ENCODE measurements at regions of chr6 and their contacts with region 1.

Region 1: GRCh38 chr6:28349892-28350737 is at the start of gene ZKSCAN3:
- DNase-seq: peak; percentile 84
- H3K4me3 Mint-ChIP-seq: peak within 1 kb of the TSS; percentile 98
- H3K27ac Mint-ChIP-seq: peak within 1 kb of the TSS; percentile 91
- H3K4me1 Mint-ChIP-seq: peaks cover 28% of the 10 kb centered on the region
- H3K27me3 Mint-ChIP-seq: peaks cover 16% of the 10 kb centered on the region
- total RNA-seq, gene ZKSCAN3: 2.9 and 3.3 TPM in 2 replicates

Region 2: GRCh38 chr6:27825025-27825793 is 524.9 kb before region 1 on chr6:
- intact Hi-C with region 1: no loop called
- DNase-seq: no peak
- H3K4me3 Mint-ChIP-seq: peak overlapping the region; percentile 89
- H3K27ac Mint-ChIP-seq: peak overlapping the region; percentile 96
- H3K4me1 Mint-ChIP-seq: peaks cover 46% of the 10 kb centered on the region
- H3K27me3 Mint-ChIP-seq: peaks cover 3% of the 10 kb centered on the region

Region 3: GRCh38 chr6:27951040-27951439 is 399.1 kb before region 1 on chr6:
- intact Hi-C with region 1: no loop called
- DNase-seq: no peak
- H3K4me3 Mint-ChIP-seq: no peak overlapping the region
- H3K27ac Mint-ChIP-seq: no peak overlapping the region
- H3K4me1 Mint-ChIP-seq: no peaks in the 10 kb centered on the region
- H3K27me3 Mint-ChIP-seq: peaks cover 22% of the 10 kb centered on the region

Region 4: GRCh38 chr6:28080631-28081485 is 269.3 kb before region 1 on chr6:
- intact Hi-C with region 1: loop called (anchors 1 kb)
- DNase-seq: peak; percentile 82
- H3K4me3 Mint-ChIP-seq: peak overlapping the region; percentile 96
- H3K27ac Mint-ChIP-seq: peak overlapping the region; percentile 96
- H3K4me1 Mint-ChIP-seq: peaks cover 21% of the 10 kb centered on the region
- H3K27me3 Mint-ChIP-seq: peaks cover 2% of the 10 kb centered on the region

Region 5: GRCh38 chr6:28335564-28336283 is 14.4 kb before region 1 on chr6 and contains the start of gene ZSCAN31:
- intact Hi-C with region 1: loop called (anchors 1 kb)
- DNase-seq: peak; percentile 56
- H3K4me3 Mint-ChIP-seq: no peak within 1 kb of the TSS
- H3K27ac Mint-ChIP-seq: no peak within 1 kb of the TSS
- H3K4me1 Mint-ChIP-seq: no peaks in the 10 kb centered on the region
- H3K27me3 Mint-ChIP-seq: peaks cover 7% of the 10 kb centered on the region
- total RNA-seq, gene ZSCAN31: 1.0 and 1.2 TPM in 2 replicates

Region 6: DNA sequence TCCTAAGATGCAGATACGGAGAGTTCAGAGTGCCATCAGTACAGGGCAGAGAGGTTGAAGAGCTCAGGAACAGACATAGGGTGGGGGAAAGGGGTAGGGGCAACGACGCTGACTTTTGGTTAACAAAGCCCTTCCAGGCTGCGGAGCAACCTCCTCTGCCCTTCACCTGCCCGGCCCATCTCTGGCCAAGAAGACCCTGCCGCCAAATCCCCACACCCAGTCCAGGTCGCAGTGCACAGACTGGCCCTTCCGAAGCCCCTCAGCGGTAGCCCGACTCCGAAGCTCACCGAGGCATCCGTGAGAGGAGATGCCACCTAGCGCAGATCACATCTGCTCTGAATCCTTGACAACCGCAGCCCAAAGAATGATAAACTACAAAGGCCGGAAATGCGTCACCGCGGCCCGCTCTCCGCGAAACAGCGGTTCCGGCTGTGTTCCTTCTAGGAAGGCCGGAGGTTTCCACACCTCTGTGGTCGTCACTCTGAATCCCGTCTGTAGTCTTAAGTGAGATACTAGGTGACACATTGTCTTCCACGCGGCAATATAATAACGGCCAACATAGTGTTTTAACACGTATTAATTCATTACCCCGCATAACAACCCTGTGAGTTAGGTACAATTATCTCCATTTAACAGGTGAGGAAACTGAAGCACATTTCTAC is 93.1 kb after region 1 on chr6 and contains the start of gene ZSCAN23:
- intact Hi-C with region 1: loop called (anchors 5 kb)
- DNase-seq: peak; percentile 79
- H3K4me3 Mint-ChIP-seq: peak within 1 kb of the TSS; percentile 98
- H3K27ac Mint-ChIP-seq: peak within 1 kb of the TSS; percentile 89
- H3K4me1 Mint-ChIP-seq: peaks cover 41% of the 10 kb centered on the region
- H3K27me3 Mint-ChIP-seq: peaks cover 16% of the 10 kb centered on the region
- total RNA-seq, gene ZSCAN23: 1.1 and 2.2 TPM in 2 replicates

Region 7: GRCh38 chr6:28683944-28684538 is 333.9 kb after region 1 on chr6:
- intact Hi-C with region 1: no loop called
- DNase-seq: no peak
- H3K4me3 Mint-ChIP-seq: no peak overlapping the region
- H3K27ac Mint-ChIP-seq: no peak overlapping the region
- H3K4me1 Mint-ChIP-seq: peaks cover 19% of the 10 kb centered on the region
- H3K27me3 Mint-ChIP-seq: peaks cover 65% of the 10 kb centered on the region